Mammary epithelial cell (primary cell): ENCODE measurements at regions of chr2 and their contacts with region 1.

Region 1: GRCh38 chr2:204024503-204024902 is 87.9 kb downstream of the ICOS start:
- DNase-seq: peak; percentile 46
- H3K4me3 ChIP-seq: no peak overlapping the region
- H3K27ac ChIP-seq: no peak overlapping the region
- H3K4me1 ChIP-seq: peaks cover 15% of the 10 kb centered on the region
- H3K27me3 ChIP-seq: no peaks in the 10 kb centered on the region
- CTCF ChIP-seq: peak; percentile 64 to 86

Region 2: GRCh38 chr2:203650860-203651613 is 373.5 kb before region 1 on chr2:
- CTCF ChIA-PET with region 1: no interaction called
- dilution Hi-C with region 1: no loop called
- in situ Hi-C with region 1: no loop called
- intact Hi-C with region 1: no loop called
- DNase-seq: peak; percentile 68
- H3K4me3 ChIP-seq: no peak overlapping the region
- H3K27ac ChIP-seq: peak overlapping the region; percentile 89
- H3K4me1 ChIP-seq: peaks cover 26% of the 10 kb centered on the region
- H3K27me3 ChIP-seq: no peaks in the 10 kb centered on the region
- CTCF ChIP-seq: peak; percentile 50 to 61

Region 3: GRCh38 chr2:203934041-203934492 is 90.4 kb before region 1 on chr2:
- CTCF ChIA-PET with region 1: no interaction called
- dilution Hi-C with region 1: no loop called
- in situ Hi-C with region 1: no loop called
- intact Hi-C with region 1: no loop called
- DNase-seq: no peak
- H3K4me3 ChIP-seq: no peak overlapping the region
- H3K27ac ChIP-seq: no peak overlapping the region
- H3K4me1 ChIP-seq: no peaks in the 10 kb centered on the region
- H3K27me3 ChIP-seq: no peaks in the 10 kb centered on the region
- CTCF ChIP-seq: no peak

Region 4: DNA sequence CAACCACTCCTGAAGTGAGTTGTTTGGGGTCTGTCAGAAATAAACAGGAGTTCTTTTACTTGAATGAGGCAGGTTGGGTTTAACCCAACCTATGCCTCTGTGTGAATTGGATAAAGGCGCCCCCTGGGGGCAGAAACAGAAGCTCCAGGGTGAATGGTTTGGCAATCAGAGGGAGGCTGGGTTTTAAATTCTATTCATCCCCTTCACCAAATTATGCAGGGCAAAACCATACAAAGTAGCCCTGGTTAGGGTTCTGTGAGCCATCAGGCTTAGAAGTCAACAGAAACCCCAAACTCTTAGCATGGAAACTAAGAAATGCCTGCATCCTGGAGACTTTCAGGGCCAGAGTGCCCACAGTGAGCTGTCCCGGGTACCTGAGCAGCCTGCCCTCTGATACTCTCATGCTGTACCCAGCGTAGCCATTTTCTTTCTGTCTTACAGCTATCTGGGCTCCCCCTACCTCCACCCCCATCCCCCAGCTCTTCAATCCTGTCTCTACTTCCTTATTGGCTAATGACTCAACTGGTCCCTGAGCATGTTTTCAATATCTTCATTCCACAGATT is 153.6 kb after region 1 on chr2:
- CTCF ChIA-PET with region 1: no interaction called
- dilution Hi-C with region 1: no loop called
- in situ Hi-C with region 1: no loop called
- intact Hi-C with region 1: loop called (anchors 1 kb)
- DNase-seq: peak; percentile 9
- H3K4me3 ChIP-seq: no peak overlapping the region
- H3K27ac ChIP-seq: no peak overlapping the region
- H3K4me1 ChIP-seq: peaks cover 4% of the 10 kb centered on the region
- H3K27me3 ChIP-seq: no peaks in the 10 kb centered on the region
- CTCF ChIP-seq: peak; percentile 56 to 58

Region 5: DNA sequence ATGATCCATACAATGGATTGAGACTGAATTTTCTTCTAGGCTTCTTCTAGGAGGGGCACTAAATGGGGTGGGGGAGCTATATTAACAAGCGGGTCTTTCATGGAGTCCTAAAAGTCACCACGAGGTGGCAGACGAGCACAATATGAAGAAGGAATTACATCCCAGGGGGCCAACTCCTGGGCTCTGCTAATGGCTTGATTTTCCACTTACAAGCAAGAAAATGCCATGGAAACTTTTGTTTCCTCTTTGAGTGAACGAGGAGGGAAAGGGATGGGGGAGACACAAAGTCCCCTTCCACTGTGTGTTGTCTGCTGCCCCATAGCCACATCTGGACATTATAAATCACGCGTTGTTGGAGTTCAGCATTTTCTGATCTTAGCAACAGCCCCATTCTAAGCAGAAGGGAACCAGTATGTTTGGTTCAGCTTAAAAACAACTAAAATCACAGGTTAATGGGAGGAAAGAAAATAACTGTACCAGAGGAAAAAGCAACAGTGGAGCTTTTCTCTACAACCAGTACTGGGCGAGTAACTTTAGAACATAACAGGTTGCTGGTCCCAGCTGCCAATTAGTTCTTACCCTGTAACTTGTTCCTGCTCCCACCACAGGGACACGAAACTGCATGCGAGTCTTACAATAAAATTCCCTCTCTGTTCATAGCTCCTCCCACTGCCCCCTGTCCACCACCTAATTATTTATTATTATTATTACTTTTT is 235.8 kb after region 1 on chr2:
- CTCF ChIA-PET with region 1: interaction called, 3 read pairs
- dilution Hi-C with region 1: no loop called
- in situ Hi-C with region 1: no loop called
- intact Hi-C with region 1: loop called (anchors 5 kb)
- DNase-seq: peak; percentile 19
- H3K4me3 ChIP-seq: no peak overlapping the region
- H3K27ac ChIP-seq: no peak overlapping the region
- H3K4me1 ChIP-seq: peaks cover 4% of the 10 kb centered on the region
- H3K27me3 ChIP-seq: no peaks in the 10 kb centered on the region
- CTCF ChIP-seq: peak; percentile 65 to 76

Region 6: DNA sequence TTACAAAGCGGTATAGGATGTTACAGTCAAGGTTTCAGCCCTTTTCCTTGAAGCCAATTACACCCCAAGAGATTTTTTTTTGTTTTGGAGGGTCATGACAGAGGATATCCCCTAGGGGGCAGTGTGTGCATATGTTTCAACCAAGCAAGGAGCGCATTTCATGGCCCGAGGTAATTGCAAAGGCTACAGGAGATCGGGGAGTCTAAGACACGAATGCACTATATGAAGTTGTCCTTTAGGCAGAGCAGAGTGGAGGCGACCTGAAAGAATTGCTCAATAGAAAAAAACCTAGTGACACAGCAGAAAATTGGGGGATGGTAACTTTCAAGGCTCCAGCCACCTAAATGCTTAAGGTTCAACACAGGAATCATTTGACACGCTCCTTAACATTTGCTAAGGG is 301.0 kb after region 1 on chr2:
- CTCF ChIA-PET with region 1: no interaction called
- dilution Hi-C with region 1: no loop called
- in situ Hi-C with region 1: no loop called
- intact Hi-C with region 1: loop called (anchors 10 kb)
- DNase-seq: peak; percentile 59
- H3K4me3 ChIP-seq: no peak overlapping the region
- H3K27ac ChIP-seq: no peak overlapping the region
- H3K4me1 ChIP-seq: no peaks in the 10 kb centered on the region
- H3K27me3 ChIP-seq: no peaks in the 10 kb centered on the region
- CTCF ChIP-seq: peak; percentile 78 to 80

Region 7: GRCh38 chr2:204625167-204625566 is 600.7 kb after region 1 on chr2:
- CTCF ChIA-PET with region 1: no interaction called
- dilution Hi-C with region 1: no loop called
- in situ Hi-C with region 1: no loop called
- intact Hi-C with region 1: loop called (anchors 5 kb)
- DNase-seq: peak; percentile 16
- H3K4me3 ChIP-seq: no peak overlapping the region
- H3K27ac ChIP-seq: no peak overlapping the region
- H3K4me1 ChIP-seq: no peaks in the 10 kb centered on the region
- H3K27me3 ChIP-seq: no peaks in the 10 kb centered on the region
- CTCF ChIP-seq: peak in 1 of 2 donors; percentile 43